ENCODE measurements at regions of chr2 and their contacts with region 1.

Region 1: GRCh38 chr2:152466980-152467676 is 132.2 kb downstream of the FMNL2 start:
- DNase-seq: no peak
- ATAC-seq: peak; percentile 77
- H3K4me3 ChIP-seq: peak overlapping the region; percentile 15 to 42
- H3K27ac ChIP-seq: peak overlapping the region; percentile 89
- H3K4me1 ChIP-seq: peaks cover 62% of the 10 kb centered on the region
- H3K27me3 ChIP-seq: no peaks in the 10 kb centered on the region
- CTCF ChIP-seq: no peak

Region 2: GRCh38 chr2:152335010-152335725 is 132.0 kb before region 1 on chr2 and contains the start of gene FMNL2:
- CTCF ChIA-PET with region 1: no interaction called
- POLR2A ChIA-PET with region 1: interaction called, 3 read pairs
- in situ Hi-C with region 1: no loop called
- intact Hi-C with region 1: loop called (anchors 5 kb)
- DNase-seq: no peak
- ATAC-seq: peak; percentile 92
- H3K4me3 ChIP-seq: peak within 1 kb of the TSS; percentile 75 to 88
- H3K27ac ChIP-seq: peak within 1 kb of the TSS; percentile 88
- H3K4me1 ChIP-seq: peaks cover 13% of the 10 kb centered on the region
- H3K27me3 ChIP-seq: no peaks in the 10 kb centered on the region
- CTCF ChIP-seq: peak; percentile 29; the same call in 1 of the 2 replicates
- total RNA-seq, gene FMNL2: 33.6 TPM

Region 3: DNA sequence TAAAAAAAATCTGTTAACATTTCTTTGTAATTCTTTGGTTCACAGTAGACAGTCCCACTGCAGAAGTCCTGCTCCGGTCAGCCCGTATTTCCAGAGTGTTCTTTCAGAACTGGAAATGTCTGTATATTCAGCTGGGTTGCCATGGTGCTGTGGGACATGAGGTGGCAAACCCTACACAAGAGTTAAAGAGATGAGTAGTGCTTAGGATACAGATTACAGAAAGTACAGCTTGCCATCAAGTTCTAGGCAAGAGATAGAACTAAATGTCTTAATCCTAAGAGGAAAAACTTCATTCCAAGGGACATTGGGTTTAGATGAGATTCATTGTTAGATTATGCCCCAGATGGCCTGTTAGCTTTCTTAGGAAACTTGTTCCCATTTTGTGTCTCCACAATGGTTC is 72.0 kb before region 1 on chr2:
- CTCF ChIA-PET with region 1: no interaction called
- POLR2A ChIA-PET with region 1: no interaction called
- in situ Hi-C with region 1: no loop called
- intact Hi-C with region 1: no loop called
- DNase-seq: no peak
- ATAC-seq: no peak
- H3K4me3 ChIP-seq: no peak overlapping the region
- H3K27ac ChIP-seq: no peak overlapping the region
- H3K4me1 ChIP-seq: peaks cover 14% of the 10 kb centered on the region
- H3K27me3 ChIP-seq: no peaks in the 10 kb centered on the region
- CTCF ChIP-seq: no peak

Region 4: DNA sequence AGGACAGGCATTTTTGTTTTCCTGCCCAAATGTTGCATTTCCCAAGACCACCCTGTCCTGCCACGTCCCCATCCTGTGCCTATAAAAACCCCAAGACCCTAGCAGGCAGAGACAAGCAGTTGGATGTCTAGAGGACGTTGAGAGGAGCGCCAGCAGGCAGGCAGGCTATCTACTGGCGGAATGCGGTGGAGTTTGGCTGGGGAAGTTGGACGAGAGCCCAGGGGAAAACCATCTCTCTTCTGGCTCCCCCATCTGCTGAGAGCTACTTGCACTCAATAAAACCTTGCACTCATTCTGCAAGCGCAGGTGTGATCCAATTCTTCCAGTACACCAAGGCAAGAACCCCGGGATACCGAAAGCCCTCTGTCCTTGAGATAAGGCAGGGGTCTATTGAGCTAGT is 323.8 kb after region 1 on chr2:
- CTCF ChIA-PET with region 1: no interaction called
- POLR2A ChIA-PET with region 1: no interaction called
- in situ Hi-C with region 1: no loop called
- intact Hi-C with region 1: no loop called
- DNase-seq: no peak
- ATAC-seq: no peak
- H3K4me3 ChIP-seq: no peak overlapping the region
- H3K27ac ChIP-seq: no peak overlapping the region
- H3K4me1 ChIP-seq: no peaks in the 10 kb centered on the region
- H3K27me3 ChIP-seq: no peaks in the 10 kb centered on the region
- CTCF ChIP-seq: no peak

Measured in Panc1 (cell line).